ENCODE measurements at regions of chr1 and their contacts with region 1.

Region 1: DNA sequence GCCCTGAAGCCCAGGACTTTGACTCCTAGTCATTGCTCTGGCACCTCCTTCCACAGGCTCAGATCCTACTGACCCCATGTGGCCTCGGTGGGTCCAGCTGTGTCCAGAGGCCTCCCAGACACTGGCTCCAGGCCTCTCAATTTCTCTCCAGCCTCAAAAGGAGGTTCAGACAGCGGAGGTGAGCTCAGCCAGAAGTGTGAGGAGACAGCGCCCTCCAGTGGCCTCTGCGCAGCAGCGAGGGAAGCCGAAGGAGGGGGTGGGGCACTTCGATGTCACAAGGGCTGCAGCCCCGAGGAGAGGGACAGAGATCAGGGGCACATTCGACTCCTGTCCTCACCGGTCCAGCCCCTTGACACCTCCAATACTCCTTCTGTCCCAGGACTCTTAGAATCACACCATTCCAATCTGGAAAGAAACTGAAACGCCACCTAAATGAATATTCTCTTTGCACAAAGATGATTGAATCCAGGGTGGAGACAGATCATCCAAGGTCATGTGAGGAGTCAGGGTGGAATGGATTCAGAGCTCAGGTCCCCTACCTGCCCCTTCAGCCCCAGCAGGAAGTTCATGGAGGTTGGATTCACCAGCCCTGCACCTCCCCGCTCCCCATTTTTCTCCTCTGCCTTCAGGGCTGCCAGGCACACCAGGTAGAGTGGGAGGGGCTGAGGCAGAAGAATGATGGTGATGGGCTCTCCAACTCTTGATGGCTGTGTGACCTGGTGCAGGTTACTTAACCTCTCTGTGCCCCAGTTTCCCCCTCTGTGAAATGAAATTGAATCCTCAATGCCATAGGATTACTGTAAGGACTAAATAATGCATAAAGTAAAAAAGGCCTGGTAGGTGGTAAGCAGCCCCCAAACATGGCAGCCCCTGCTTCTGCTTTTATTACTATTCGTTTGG is 34.8 kb upstream of the ZBTB40 start:
- DNase-seq: peak; percentile 79
- H3K4me3 ChIP-seq: no peak overlapping the region
- H3K27ac ChIP-seq: no peak overlapping the region
- H3K4me1 ChIP-seq: peaks cover 24% of the 10 kb centered on the region
- H3K27me3 ChIP-seq: peaks cover 15 to 18% of the 10 kb centered on the region in 2 experiments
- CTCF ChIP-seq: peak; percentile 93 to 97
- POLR2A ChIP-seq: no peak

Region 2: DNA sequence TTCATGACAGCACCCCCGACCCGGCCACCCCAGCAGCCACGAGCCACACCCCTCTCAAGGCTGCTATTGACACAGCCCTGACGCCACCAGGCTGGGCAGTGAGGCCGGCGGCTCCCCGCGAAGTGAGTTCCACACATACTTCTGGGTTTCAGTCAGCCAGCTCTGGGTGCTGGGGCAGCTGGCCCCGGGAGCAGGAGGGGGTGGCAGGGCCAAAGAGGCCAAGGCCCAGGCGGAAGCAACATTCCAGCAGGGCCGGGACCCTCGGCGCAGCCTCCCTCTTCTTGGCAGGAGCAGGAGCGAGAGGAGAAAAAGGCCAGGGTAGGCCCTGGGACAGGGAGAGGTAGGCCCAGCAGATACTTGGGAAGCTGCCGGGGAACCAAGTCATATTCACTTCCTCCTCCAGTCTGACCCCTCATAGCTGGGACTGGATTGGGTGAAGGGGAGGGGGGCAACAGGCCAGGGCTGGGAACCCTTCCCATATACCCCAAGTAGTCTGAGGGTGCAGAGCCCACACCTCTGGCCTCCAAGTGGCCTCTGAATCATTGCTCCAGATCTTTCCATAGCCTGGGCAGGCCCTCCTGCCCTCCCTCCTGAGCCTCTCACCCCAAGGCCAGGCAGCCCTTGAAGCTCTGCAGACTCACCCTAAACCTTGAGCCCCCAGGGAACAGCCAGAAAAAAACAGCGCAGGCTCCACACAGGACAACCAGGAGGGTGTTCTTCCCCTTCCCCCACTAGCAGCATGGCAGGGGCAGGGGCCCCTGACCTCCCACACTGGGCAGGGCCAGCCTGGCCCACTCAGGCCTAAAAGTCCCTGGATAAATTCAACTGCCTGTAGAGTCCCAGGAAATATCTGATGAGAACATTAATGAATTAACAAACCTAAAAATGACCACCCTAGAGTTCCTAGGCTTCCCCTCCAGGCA is 485.4 kb before region 1 on chr1:
- CTCF ChIA-PET with region 1: interaction called, 5 read pairs
- POLR2A ChIA-PET with region 1: no interaction called
- dilution Hi-C with region 1: no loop called
- intact Hi-C with region 1: loop called (anchors 5 kb)
- DNase-seq: peak; percentile 70
- H3K4me3 ChIP-seq: peak overlapping the region in 2 of 3 experiments; percentile 71 to 88
- H3K27ac ChIP-seq: peak overlapping the region; percentile 81
- H3K4me1 ChIP-seq: peaks cover 70% of the 10 kb centered on the region
- H3K27me3 ChIP-seq: no peaks in the 10 kb centered on the region
- CTCF ChIP-seq: no peak
- POLR2A ChIP-seq: no peak

Region 3: DNA sequence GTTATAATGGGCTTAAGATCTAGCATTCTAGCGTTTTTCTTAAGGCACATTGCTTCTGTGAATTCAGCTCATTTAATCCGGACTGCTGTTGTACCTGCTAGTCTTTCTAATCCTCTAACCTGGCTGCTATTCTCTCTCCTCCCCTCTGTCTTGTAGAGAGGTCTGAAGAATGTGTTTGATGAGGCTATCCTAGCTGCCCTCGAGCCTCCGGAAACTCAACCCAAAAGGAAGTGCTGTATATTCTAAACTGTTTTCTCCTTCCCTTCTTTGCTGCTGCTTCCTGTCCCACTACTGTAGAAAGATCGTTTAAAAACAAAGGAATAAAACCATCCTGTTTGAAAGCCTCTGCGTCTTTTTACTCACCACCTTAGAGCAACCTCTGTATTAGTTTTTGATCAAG is 327.0 kb before region 1 on chr1:
- CTCF ChIA-PET with region 1: interaction called, 10 read pairs
- POLR2A ChIA-PET with region 1: no interaction called
- dilution Hi-C with region 1: no loop called
- intact Hi-C with region 1: no loop called
- DNase-seq: peak; percentile 52
- H3K4me3 ChIP-seq: peak overlapping the region in 2 of 3 experiments; percentile 17 to 52
- H3K27ac ChIP-seq: peak overlapping the region; percentile 20
- H3K4me1 ChIP-seq: peaks cover 52% of the 10 kb centered on the region
- H3K27me3 ChIP-seq: no peaks in the 10 kb centered on the region
- CTCF ChIP-seq: no peak
- POLR2A ChIP-seq: no peak

Region 4: GRCh38 chr1:22114083-22115012 is 302.5 kb before region 1 on chr1:
- CTCF ChIA-PET with region 1: interaction called, 13 read pairs
- POLR2A ChIA-PET with region 1: no interaction called
- dilution Hi-C with region 1: no loop called
- intact Hi-C with region 1: no loop called
- DNase-seq: peak; percentile 93
- H3K4me3 ChIP-seq: no peak overlapping the region
- H3K27ac ChIP-seq: peak overlapping the region; percentile 59
- H3K4me1 ChIP-seq: peaks cover 40% of the 10 kb centered on the region
- H3K27me3 ChIP-seq: no peaks in the 10 kb centered on the region
- CTCF ChIP-seq: no peak
- POLR2A ChIP-seq: peak; percentile 48

Region 5: GRCh38 chr1:22562584-22563583 is 146.1 kb after region 1 on chr1 and contains the start of gene EPHA8:
- CTCF ChIA-PET with region 1: no interaction called
- POLR2A ChIA-PET with region 1: no interaction called
- dilution Hi-C with region 1: no loop called
- intact Hi-C with region 1: loop called (anchors 10 kb)
- DNase-seq: no peak
- H3K4me3 ChIP-seq: no peak within 1 kb of the TSS
- H3K27ac ChIP-seq: no peak within 1 kb of the TSS
- H3K4me1 ChIP-seq: no peaks in the 10 kb centered on the region
- H3K27me3 ChIP-seq: peaks cover 35 to 51% of the 10 kb centered on the region in 2 experiments
- CTCF ChIP-seq: no peak
- POLR2A ChIP-seq: no peak
- total RNA-seq, gene EPHA8: not detected in 2 replicates

Region 6: GRCh38 chr1:22930235-22930912 is 513.6 kb after region 1 on chr1:
- CTCF ChIA-PET with region 1: interaction called, 10 read pairs
- POLR2A ChIA-PET with region 1: no interaction called
- dilution Hi-C with region 1: no loop called
- intact Hi-C with region 1: loop called (anchors 1 kb)
- DNase-seq: peak; percentile 49
- H3K4me3 ChIP-seq: no peak overlapping the region
- H3K27ac ChIP-seq: no peak overlapping the region
- H3K4me1 ChIP-seq: no peaks in the 10 kb centered on the region
- H3K27me3 ChIP-seq: no peaks in the 10 kb centered on the region
- CTCF ChIP-seq: peak; percentile 84 to 88
- POLR2A ChIP-seq: no peak